Posterior vena cava (tissue), 2 donors: ENCODE measurements at regions of chr7 and their contacts with region 1.

Region 1: DNA sequence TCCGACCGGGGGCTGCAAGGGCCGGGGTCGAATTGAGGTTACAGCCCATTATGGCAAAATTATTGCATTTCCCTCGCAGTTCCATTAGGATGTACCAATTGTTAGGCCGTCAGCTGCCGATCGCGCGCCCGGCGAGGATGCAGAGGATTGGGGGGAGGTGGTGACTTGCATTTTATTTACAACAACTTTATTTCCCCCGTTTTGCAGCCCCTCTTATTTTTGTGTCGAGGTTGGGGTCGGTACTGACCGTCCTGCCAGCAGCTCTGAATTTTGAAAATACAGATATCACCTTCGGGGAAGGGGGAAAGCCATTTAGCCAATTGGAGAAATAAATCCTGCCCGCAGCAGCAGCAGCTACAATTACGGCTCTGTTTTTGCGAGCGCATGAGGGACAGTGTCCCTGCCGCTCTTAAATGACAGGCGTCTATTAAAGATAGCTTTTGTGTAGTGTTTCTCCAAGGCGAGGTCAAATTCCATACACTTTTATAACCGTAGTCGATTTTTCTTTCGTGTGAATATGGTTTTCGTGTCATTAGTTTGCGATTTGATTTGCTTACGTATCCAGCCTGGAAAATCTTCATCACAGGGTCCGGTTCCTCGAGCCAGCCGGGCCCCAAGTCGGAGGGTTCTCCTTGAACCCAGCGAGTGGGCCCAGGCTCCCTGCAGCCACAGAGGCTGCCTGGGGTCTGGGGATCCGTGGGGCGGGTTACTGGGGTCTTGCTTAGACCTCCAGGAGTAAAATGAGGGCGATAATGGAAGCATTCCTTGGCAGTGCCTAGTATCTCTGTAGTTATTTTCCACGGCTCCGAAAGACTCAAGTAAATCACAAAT is 684 bp upstream of the HOXA5 start:
- DNase-seq: no peak

Region 2: GRCh38 chr7:26684447-26684846 is 459.7 kb before region 1 on chr7:
- intact Hi-C with region 1: loop called in 1 of 2 experiments (anchors 1 kb)
- DNase-seq: no peak

Region 3: GRCh38 chr7:27312820-27313219 is 168.7 kb after region 1 on chr7:
- intact Hi-C with region 1: no loop called
- DNase-seq: no peak

Region 4: DNA sequence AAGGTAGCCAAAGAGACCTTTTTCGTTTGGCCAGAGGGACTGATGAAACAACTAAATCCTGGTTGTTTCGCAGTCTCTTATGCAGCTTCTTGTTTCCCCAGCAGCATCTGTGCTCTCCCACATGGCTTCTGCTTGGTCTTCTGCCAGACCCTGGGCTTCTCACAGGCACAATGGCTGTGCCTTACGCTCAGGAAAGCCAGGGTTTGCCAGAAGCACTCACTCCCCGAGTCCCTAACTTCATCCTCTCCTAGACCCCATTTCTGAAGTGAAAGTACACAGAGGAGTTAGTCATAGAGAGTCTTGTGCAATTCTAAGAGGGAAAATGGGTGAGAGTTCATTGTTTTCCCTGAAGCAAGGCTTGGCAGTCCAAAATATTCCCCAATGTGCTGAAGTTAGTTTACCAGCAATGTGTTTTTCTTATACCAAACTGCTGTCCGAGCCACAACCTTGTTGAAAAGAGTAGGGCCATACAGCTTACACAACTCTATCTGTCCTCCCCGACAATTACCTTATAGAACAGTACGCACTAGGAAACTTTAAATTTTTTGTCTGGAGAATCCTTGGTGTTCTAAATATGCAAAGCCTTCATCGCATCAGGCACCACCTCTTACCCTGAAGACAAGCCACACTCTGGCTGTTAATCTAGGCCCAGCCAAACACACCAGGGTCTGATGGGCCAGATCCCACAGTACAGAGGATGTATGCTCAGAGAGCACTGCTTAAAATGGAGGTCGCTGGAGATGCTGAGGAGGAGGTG is 220.4 kb after region 1 on chr7:
- intact Hi-C with region 1: no loop called
- DNase-seq: peak; percentile 84